A549 (cell line): ENCODE measurements at regions of chr3 and their contacts with region 1.

Region 1: DNA sequence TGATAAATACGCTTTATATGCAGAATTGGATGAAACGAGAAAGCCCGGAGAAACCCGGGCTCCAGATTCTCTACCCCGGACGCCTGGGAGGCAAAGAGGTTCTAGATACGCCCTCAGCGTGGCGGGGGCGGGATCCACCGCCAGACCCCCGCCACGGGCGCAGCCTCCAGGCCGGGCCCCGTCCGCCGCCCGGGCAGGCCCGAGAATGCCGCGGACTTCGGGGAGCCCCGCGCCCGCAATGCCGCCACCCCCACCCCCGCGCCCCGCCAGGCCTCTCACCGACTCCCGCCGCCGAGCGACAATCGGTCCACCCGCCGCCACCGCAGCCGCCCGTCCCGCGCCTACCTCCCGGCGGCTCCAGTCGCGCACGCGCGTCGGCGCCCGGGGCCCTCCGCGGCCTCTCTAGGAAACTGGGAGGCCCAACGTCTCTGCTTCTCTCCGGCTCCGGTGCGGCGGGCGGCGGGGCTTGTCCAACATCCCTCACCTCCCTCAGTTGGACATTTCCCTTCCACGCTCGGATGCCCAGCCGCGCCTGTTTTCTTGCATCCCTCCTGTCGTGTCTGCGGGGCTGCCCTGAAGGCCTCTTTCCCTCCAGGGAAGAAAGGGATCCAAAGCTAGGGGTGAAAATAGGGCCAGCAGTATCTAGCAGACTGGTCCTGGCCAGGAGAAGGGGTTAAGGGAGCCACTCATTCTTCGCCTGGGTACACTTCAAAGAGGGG is at the start of gene ZNF445:
- DNase-seq: peak; percentile 57 to 80
- ATAC-seq: peak; percentile 99
- H3K4me3 ChIP-seq: peak within 1 kb of the TSS; percentile 70
- H3K27ac ChIP-seq: peak within 1 kb of the TSS; percentile 92 to 97
- H3K4me1 ChIP-seq: peaks cover 9% of the 10 kb centered on the region; the same call in 1 of the 3 replicates
- CTCF ChIP-seq: no peak
- EP300 ChIP-seq: no peak
- POLR2A ChIP-seq: peak; percentile 57
- RAD21 ChIP-seq: no peak
- polyA plus RNA-seq, gene ZNF445: 3.4 and 4.8 TPM in 2 replicates

Region 2: GRCh38 chr3:44510000-44510368 is 32.5 kb after region 1 on chr3:
- CTCF ChIA-PET with region 1: no interaction called
- POLR2A ChIA-PET with region 1: interaction called, 18 read pairs
- DNase-seq: peak; percentile 5 to 12
- ATAC-seq: peak in 1 of 2 experiments; percentile 28; a peak in 3 of 6 replicates
- H3K4me3 ChIP-seq: peak overlapping the region; percentile 95
- H3K27ac ChIP-seq: peak overlapping the region; percentile 90 to 98
- H3K4me1 ChIP-seq: 0 out of 3 replicates have a peak, but pooled peaks cover 3% of the 10 kb centered on the region
- CTCF ChIP-seq: no peak
- EP300 ChIP-seq: no peak
- POLR2A ChIP-seq: no peak
- RAD21 ChIP-seq: no peak